Calu3 (cell line): ENCODE measurements at regions of chr11 and their contacts with region 1.

Region 1: DNA sequence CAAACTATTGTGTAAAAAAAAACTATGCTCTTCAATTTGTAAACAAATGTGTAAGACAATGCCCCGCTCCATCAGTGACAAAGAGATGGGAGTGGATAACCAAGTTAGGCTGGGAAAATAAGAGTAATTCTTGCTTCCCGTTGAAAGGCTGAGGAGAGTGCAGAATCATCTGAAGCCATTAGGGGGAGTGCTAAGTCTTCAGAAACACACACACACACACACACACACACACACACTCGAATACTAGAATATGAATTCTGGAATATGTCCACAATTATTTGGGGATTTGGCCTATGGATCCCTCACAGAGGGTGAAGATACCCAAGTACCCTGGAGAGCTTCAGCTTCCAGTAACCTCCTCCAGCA is 27.8 kb upstream of the ROBO3 start:
- DNase-seq: peak; percentile 21
- H3K4me3 Mint-ChIP-seq: no peak overlapping the region
- H3K27ac Mint-ChIP-seq: no peak overlapping the region
- H3K4me1 Mint-ChIP-seq: no peaks in the 10 kb centered on the region
- H3K27me3 Mint-ChIP-seq: peaks cover 45% of the 10 kb centered on the region
- CTCF ChIP-seq: no peak

Region 2: DNA sequence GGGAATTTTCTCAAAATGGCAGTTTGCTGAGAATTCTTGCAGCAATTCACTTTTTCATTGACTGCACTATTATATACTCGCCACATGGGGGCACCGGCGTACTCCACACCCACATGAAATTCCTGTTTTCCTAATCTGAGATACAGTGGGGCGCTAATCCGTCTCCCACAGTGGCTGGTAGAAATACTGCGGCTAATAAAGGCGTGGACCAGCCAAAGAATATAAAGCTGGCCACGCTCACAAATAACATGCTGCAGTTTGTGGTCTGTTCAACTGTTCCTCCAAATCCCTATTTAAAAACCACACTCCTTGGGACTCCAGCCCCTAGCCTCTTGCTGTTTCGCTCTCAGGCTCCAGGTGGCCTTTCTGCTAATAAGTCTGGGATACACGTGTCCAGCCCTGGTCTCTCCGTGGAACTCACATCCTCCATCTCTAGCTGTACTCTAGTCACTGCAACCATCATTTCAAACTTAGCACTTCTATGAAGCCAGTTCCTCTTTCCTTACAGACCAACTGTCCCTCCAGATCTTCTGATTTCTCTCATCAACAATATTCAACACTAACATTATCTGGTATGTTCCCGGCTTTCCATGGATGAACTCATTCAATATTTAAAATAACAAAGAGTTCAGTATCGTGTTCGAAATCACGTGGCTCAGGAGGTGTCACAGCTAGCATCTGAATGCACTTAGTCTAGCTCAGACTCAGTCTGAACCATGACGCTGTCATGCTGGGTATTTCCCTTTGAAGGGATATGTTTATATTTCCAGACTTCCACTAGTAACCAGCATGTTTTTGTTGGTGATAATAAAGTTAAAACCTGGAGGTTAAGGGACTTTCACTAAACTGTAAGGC is 192.8 kb before region 1 on chr11:
- CTCF ChIA-PET with region 1: no interaction called
- intact Hi-C with region 1: loop called (anchors 1 kb)
- DNase-seq: peak; percentile 37
- H3K4me3 Mint-ChIP-seq: peak overlapping the region; percentile 44
- H3K27ac Mint-ChIP-seq: no peak overlapping the region
- H3K4me1 Mint-ChIP-seq: peaks cover 7% of the 10 kb centered on the region
- H3K27me3 Mint-ChIP-seq: no peaks in the 10 kb centered on the region
- CTCF ChIP-seq: peak; percentile 55

Region 3: GRCh38 chr11:124758317-124759203 is 78.9 kb before region 1 on chr11:
- CTCF ChIA-PET with region 1: no interaction called
- intact Hi-C with region 1: loop called (anchors 2 kb)
- DNase-seq: peak; percentile 83
- H3K4me3 Mint-ChIP-seq: peak overlapping the region; percentile 73
- H3K27ac Mint-ChIP-seq: no peak overlapping the region
- H3K4me1 Mint-ChIP-seq: peaks cover 15% of the 10 kb centered on the region
- H3K27me3 Mint-ChIP-seq: no peaks in the 10 kb centered on the region
- CTCF ChIP-seq: peak; percentile 72

Region 4: GRCh38 chr11:124800226-124800929 is 37.1 kb before region 1 on chr11 and contains the start of gene MSANTD2:
- CTCF ChIA-PET with region 1: interaction called, 4 read pairs
- intact Hi-C with region 1: loop called (anchors 2 kb)
- DNase-seq: peak; percentile 78
- H3K4me3 Mint-ChIP-seq: peak within 1 kb of the TSS; percentile 99
- H3K27ac Mint-ChIP-seq: peak within 1 kb of the TSS; percentile 78
- H3K4me1 Mint-ChIP-seq: no peaks in the 10 kb centered on the region
- H3K27me3 Mint-ChIP-seq: no peaks in the 10 kb centered on the region
- CTCF ChIP-seq: no peak
- total RNA-seq, gene MSANTD2: 12.6 and 13.0 TPM in 2 replicates